Activated T-helper 1 cell treated with anti-CD3 and anti-CD28 coated beads, Interleukin-12 subunit alpha, Interleukin-12 subunit beta, Interleukin-2, Interleukin-4 antibody, amounts not matched to agents 30 ng/mL and 10 ng/mL and 1 ng/mL, durations not matched to agents 14 hours and 24 hours and 36 hours (primary cell): ENCODE measurements at regions of chr1 and their contacts with region 1.

Region 1: GRCh38 chr1:78617615-78618026 is 2.6 kb upstream of the IFI44L start:
- DNase-seq: peak; percentile 53
- H3K4me3 Mint-ChIP-seq: peak overlapping the region; percentile 51
- H3K27ac Mint-ChIP-seq: peak overlapping the region; percentile 30
- H3K4me1 Mint-ChIP-seq: peaks cover 42% of the 10 kb centered on the region
- H3K27me3 Mint-ChIP-seq: peaks cover 13% of the 10 kb centered on the region

Region 2: DNA sequence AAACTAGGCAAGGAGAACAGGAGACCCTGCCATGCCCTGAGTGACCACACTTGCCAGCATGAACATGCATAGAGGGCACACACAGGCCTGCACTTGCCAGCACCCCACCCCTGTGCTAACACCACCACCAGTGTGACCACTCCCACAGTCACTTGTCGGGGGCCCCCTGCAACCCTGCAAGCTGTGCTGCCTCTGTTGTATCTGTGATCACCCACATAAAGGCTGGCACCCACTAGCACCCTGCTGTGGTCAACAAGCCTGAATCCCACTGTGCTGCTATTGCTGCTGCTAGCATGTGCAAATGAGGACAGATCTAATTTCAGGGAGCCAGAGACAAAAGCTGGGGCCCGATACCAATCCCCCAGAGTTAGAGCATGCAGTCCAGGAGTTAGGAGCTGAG is 354.2 kb before region 1 on chr1:
- intact Hi-C with region 1: no loop called
- DNase-seq: no peak
- H3K4me3 Mint-ChIP-seq: no peak overlapping the region
- H3K27ac Mint-ChIP-seq: no peak overlapping the region
- H3K4me1 Mint-ChIP-seq: no peaks in the 10 kb centered on the region
- H3K27me3 Mint-ChIP-seq: no peaks in the 10 kb centered on the region

Region 3: DNA sequence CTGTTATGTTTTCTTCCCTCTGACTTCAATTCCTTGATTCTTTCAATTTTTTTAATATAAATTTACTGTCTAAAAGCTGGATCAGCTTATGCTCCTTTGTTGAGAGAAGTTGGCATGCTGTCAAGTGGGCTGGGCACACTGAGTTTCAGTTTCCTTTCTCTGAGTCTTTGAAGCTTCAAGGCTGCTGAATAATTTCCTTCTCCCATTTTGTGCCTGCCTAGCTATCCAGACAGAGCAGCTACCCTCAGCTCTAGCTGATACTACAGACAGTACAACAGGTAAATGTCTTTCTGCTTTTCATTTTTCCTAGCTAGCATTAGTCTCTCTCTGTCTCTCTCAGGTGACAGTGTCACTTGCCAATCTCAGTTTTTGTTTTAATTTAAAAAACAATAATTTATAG is 32.0 kb after region 1 on chr1 and contains the start of gene IFI44:
- intact Hi-C with region 1: loop called (anchors 1 kb)
- DNase-seq: peak; percentile 50
- H3K4me3 Mint-ChIP-seq: peak within 1 kb of the TSS; percentile 88
- H3K27ac Mint-ChIP-seq: peak within 1 kb of the TSS; percentile 91
- H3K4me1 Mint-ChIP-seq: peaks cover 58% of the 10 kb centered on the region
- H3K27me3 Mint-ChIP-seq: no peaks in the 10 kb centered on the region
- total RNA-seq, gene IFI44: 26.9 and 28.1 TPM in 2 replicates

Region 4: GRCh38 chr1:78676347-78676982 is 58.8 kb after region 1 on chr1:
- intact Hi-C with region 1: loop called (anchors 1 kb)
- DNase-seq: peak; percentile 25
- H3K4me3 Mint-ChIP-seq: no peak overlapping the region
- H3K27ac Mint-ChIP-seq: no peak overlapping the region
- H3K4me1 Mint-ChIP-seq: peaks cover 34% of the 10 kb centered on the region
- H3K27me3 Mint-ChIP-seq: peaks cover 8% of the 10 kb centered on the region

Region 5: GRCh38 chr1:78839704-78840277 is 222.2 kb after region 1 on chr1:
- intact Hi-C with region 1: loop called (anchors 2 kb)
- DNase-seq: no peak
- H3K4me3 Mint-ChIP-seq: no peak overlapping the region
- H3K27ac Mint-ChIP-seq: no peak overlapping the region
- H3K4me1 Mint-ChIP-seq: peaks cover 12% of the 10 kb centered on the region
- H3K27me3 Mint-ChIP-seq: peaks cover 6% of the 10 kb centered on the region

Region 6: GRCh38 chr1:79042117-79042516 is 424.5 kb after region 1 on chr1:
- intact Hi-C with region 1: loop called (anchors 5 kb)
- DNase-seq: no peak
- H3K4me3 Mint-ChIP-seq: no peak overlapping the region
- H3K27ac Mint-ChIP-seq: no peak overlapping the region
- H3K4me1 Mint-ChIP-seq: peaks cover 16% of the 10 kb centered on the region
- H3K27me3 Mint-ChIP-seq: no peaks in the 10 kb centered on the region